ENCODE measurements at regions of chr10 and their contacts with region 1.

Region 1: GRCh38 chr10:66997021-66997420 is 71.2 kb downstream of the LRRTM3 start:
- DNase-seq: no peak
- H3K4me3 Mint-ChIP-seq: no peak overlapping the region
- H3K27ac Mint-ChIP-seq: no peak overlapping the region
- H3K4me1 Mint-ChIP-seq: no peaks in the 10 kb centered on the region
- H3K27me3 Mint-ChIP-seq: no peaks in the 10 kb centered on the region
- CTCF ChIP-seq: no peak

Region 2: GRCh38 chr10:67151471-67151870 is 154.4 kb after region 1 on chr10:
- CTCF ChIA-PET with region 1: no interaction called
- intact Hi-C with region 1: loop called (anchors 10 kb)
- DNase-seq: no peak
- H3K4me3 Mint-ChIP-seq: no peak overlapping the region
- H3K27ac Mint-ChIP-seq: no peak overlapping the region
- H3K4me1 Mint-ChIP-seq: no peaks in the 10 kb centered on the region
- H3K27me3 Mint-ChIP-seq: no peaks in the 10 kb centered on the region
- CTCF ChIP-seq: no peak

Region 3: GRCh38 chr10:67549390-67549789 is 552.4 kb after region 1 on chr10:
- CTCF ChIA-PET with region 1: no interaction called
- intact Hi-C with region 1: no loop called
- DNase-seq: no peak
- H3K4me3 Mint-ChIP-seq: no peak overlapping the region
- H3K27ac Mint-ChIP-seq: no peak overlapping the region
- H3K4me1 Mint-ChIP-seq: no peaks in the 10 kb centered on the region
- H3K27me3 Mint-ChIP-seq: no peaks in the 10 kb centered on the region
- CTCF ChIP-seq: no peak